MCF 10A (cell line): ENCODE measurements at regions of chr3 and their contacts with region 1.

Region 1: DNA sequence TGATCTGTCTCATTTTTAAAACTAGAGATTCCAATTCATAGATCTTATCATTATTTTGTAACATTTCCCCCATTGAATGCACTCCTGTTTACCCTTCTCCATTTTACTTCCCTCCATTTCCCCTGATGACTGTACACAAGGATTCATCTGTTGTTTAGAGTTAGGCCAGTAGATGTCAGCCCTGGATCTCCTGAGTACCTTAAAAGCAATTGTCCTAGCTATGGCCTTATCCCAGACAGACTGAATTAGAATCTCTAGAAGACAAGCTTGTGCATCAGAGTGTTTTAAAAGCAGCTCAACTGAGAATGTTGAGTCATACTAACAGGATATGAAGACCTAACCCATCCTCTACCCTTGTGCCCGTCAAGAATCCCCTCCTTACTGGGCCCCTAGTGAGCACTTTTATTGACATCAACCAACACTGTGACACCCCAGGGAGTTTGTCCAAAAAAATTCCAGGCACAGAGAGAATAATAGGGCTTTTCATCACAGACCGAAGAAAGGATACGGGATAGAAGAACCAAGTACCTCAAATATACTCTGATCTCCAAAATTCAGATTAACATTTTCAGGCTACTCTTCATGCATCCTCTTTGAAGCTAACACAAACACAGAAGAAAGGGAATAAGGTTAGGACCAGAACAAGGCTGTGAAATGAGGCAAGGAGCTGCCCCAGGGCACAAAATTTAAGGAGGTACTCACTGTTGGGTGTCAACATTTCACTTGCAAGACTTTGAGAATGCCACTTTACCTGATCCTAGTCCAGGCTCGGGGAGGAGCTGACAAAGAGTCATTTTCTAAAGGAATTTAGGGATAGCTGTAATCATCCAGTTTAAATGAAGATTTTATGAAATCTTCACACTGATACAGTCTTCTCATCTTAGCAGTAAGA is 17.1 kb downstream of the ZBED2 start:
- DNase-seq: peak; percentile 81
- H3K4me3 Mint-ChIP-seq: no peak overlapping the region
- H3K27ac Mint-ChIP-seq: no peak overlapping the region
- H3K4me1 Mint-ChIP-seq: peaks cover 31% of the 10 kb centered on the region
- H3K27me3 Mint-ChIP-seq: no peaks in the 10 kb centered on the region
- CTCF ChIP-seq: peak; percentile 82

Region 2: GRCh38 chr3:110550511-110550910 is 1027.5 kb before region 1 on chr3:
- CTCF ChIA-PET with region 1: no interaction called
- POLR2A ChIA-PET with region 1: no interaction called
- intact Hi-C with region 1: no loop called
- DNase-seq: no peak
- H3K4me3 Mint-ChIP-seq: no peak overlapping the region
- H3K27ac Mint-ChIP-seq: no peak overlapping the region
- H3K4me1 Mint-ChIP-seq: no peaks in the 10 kb centered on the region
- H3K27me3 Mint-ChIP-seq: no peaks in the 10 kb centered on the region
- CTCF ChIP-seq: no peak

Region 3: GRCh38 chr3:111616417-111617105 is 38.5 kb after region 1 on chr3:
- CTCF ChIA-PET with region 1: interaction called, 45 read pairs
- POLR2A ChIA-PET with region 1: interaction called, 7 read pairs
- intact Hi-C with region 1: loop called (anchors 1 kb)
- DNase-seq: peak; percentile 52
- H3K4me3 Mint-ChIP-seq: no peak overlapping the region
- H3K27ac Mint-ChIP-seq: no peak overlapping the region
- H3K4me1 Mint-ChIP-seq: peaks cover 24% of the 10 kb centered on the region
- H3K27me3 Mint-ChIP-seq: no peaks in the 10 kb centered on the region
- CTCF ChIP-seq: peak; percentile 8

Region 4: GRCh38 chr3:111676211-111677006 is 98.4 kb after region 1 on chr3:
- CTCF ChIA-PET with region 1: interaction called, 14 read pairs
- POLR2A ChIA-PET with region 1: no interaction called
- intact Hi-C with region 1: no loop called
- DNase-seq: peak; percentile 67
- H3K4me3 Mint-ChIP-seq: peak overlapping the region; percentile 78
- H3K27ac Mint-ChIP-seq: peak overlapping the region; percentile 86
- H3K4me1 Mint-ChIP-seq: peaks cover 29% of the 10 kb centered on the region
- H3K27me3 Mint-ChIP-seq: no peaks in the 10 kb centered on the region
- CTCF ChIP-seq: no peak

Region 5: DNA sequence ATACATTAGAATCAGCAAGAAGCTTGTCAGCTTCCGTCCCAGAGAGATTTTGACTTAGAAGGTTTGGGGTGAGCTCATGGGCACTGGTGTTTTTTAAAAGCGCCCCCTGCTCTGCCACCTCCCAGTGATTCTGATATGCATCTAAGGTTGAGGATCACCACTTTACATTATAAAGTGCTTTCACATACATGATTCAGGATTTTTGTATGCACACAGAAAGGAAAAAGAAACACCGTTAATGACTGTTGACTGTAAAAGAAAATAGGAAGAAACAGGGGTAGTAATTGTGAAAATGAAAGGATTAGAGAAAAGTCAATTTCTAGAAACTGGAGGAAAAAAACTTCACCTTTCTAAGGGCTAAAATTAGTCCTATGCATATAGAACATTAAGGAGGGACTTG is 122.0 kb after region 1 on chr3:
- CTCF ChIA-PET with region 1: interaction called, 193 read pairs
- POLR2A ChIA-PET with region 1: no interaction called
- intact Hi-C with region 1: no loop called
- DNase-seq: no peak
- H3K4me3 Mint-ChIP-seq: no peak overlapping the region
- H3K27ac Mint-ChIP-seq: no peak overlapping the region
- H3K4me1 Mint-ChIP-seq: peaks cover 6% of the 10 kb centered on the region
- H3K27me3 Mint-ChIP-seq: no peaks in the 10 kb centered on the region
- CTCF ChIP-seq: no peak